Heart right ventricle (tissue), 16 donors: ENCODE measurements at regions of chr3 and their contacts with region 1.

Region 1: GRCh38 chr3:197749601-197750395 is at the start of gene FYTTD1:
- DNase-seq: peak; percentile 89 to 94
- ATAC-seq: peak; percentile 90 to 96 (median 94)
- H3K4me3 ChIP-seq: peak within 1 kb of the TSS; percentile 79 to 94 (median 85)
- H3K27ac ChIP-seq: peak within 1 kb of the TSS; percentile 85 to 98 (median 98)
- H3K4me1 ChIP-seq: peaks cover 5 to 66% (median 35%) of the 10 kb centered on the region in 9 donors
- H3K27me3 ChIP-seq: no peaks in the 10 kb centered on the region
- CTCF ChIP-seq: peak; percentile 35 to 74 (median 56)
- total RNA-seq, gene FYTTD1: 63.5 to 111 (median 82.4) TPM

Region 2: GRCh38 chr3:197692641-197693040 is 57.2 kb before region 1 on chr3:
- intact Hi-C with region 1: no loop called
- DNase-seq: no peak
- ATAC-seq: no peak
- H3K4me3 ChIP-seq: no peak overlapping the region
- H3K27ac ChIP-seq: no peak overlapping the region
- H3K4me1 ChIP-seq: peaks cover 0 to 10% (median 0%) of the 10 kb centered on the region in 9 donors
- H3K27me3 ChIP-seq: no peaks in the 10 kb centered on the region
- CTCF ChIP-seq: no peak

Region 3: DNA sequence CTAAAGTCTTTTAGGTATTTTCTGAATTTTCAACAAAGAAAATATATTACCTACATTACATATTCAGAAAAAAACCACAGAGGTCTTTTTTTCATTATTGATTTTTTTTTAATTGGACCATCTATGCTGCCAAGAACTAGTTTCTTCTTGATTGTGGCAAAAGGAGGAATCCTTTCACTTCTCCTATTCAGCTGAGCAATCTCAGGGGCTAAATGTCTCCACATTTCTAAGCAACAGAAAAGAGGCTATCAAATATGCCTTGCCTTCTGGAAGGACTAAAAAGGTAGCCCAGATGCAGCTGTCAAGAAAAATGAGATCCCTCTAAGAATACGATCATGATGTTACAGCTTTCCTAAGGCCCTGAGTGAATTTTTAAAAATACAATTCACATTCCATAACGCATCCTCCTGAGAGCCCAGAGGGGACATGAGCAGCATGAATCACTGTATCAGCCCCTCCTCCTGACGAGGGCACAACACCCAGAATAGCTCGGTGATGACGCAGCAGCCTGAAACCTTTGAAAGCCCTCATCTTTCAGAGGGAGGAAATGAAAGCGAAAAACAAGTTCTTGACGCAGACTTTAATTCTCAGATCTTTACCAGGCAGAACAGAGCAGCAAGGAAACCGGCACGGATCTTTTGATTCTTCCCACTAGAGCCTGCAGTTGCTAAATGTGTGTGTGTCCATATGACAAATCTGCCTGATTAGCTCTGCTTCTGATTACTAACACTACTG is 37.7 kb before region 1 on chr3:
- intact Hi-C with region 1: loop called in 4 of 10 experiments (anchors 1 to 5 kb)
- DNase-seq: peak; percentile 71 to 92
- ATAC-seq: peak; percentile 90 to 99 (median 96)
- H3K4me3 ChIP-seq: peak overlapping the region in 9 of 10 donors; percentile 24 to 52 (median 42)
- H3K27ac ChIP-seq: peak overlapping the region; percentile 69 to 97 (median 91)
- H3K4me1 ChIP-seq: peaks cover 2 to 47% (median 20%) of the 10 kb centered on the region in 9 donors
- H3K27me3 ChIP-seq: no peaks in the 10 kb centered on the region
- CTCF ChIP-seq: no peak

Region 4: GRCh38 chr3:197791113-197791891 is 41.5 kb after region 1 on chr3 and contains the start of gene LRCH3:
- intact Hi-C with region 1: loop called in 6 of 10 experiments (anchors 5 kb)
- DNase-seq: peak; percentile 80 to 87
- ATAC-seq: peak; percentile 89 to 94 (median 92)
- H3K4me3 ChIP-seq: peak within 1 kb of the TSS; percentile 70 to 98 (median 90)
- H3K27ac ChIP-seq: peak within 1 kb of the TSS; percentile 94 to 99 (median 98)
- H3K4me1 ChIP-seq: peaks cover 3 to 40% (median 31%) of the 10 kb centered on the region in 9 donors
- H3K27me3 ChIP-seq: no peaks in the 10 kb centered on the region
- CTCF ChIP-seq: no peak
- total RNA-seq, gene LRCH3: 21.5 to 33.2 (median 28.0) TPM

Region 5: DNA sequence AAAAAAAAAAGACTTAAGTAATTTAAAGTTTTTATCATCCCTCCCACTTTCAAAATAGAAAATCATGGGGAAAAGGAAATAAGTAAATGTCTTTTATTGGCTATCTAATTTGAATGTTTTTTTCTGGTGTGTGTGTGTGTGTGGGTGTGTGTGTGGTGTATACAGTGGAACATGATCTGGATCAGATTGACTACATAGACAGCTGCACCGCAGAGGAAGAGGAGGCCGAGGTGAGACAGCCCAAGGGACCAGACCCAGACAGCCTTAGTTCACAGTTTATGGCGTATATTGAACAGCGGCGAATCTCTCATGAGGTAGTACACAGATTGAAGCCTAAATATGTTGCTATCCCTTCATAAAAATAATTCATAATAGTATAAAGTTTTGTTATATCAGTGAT is 85.7 kb after region 1 on chr3:
- intact Hi-C with region 1: no loop called
- DNase-seq: no peak
- ATAC-seq: no peak
- H3K4me3 ChIP-seq: no peak overlapping the region
- H3K27ac ChIP-seq: no peak overlapping the region
- H3K4me1 ChIP-seq: no peaks in the 10 kb centered on the region
- H3K27me3 ChIP-seq: no peaks in the 10 kb centered on the region
- CTCF ChIP-seq: no peak